ENCODE measurements at regions of chr10 and their contacts with region 1.

Region 1: GRCh38 chr10:58531084-58531695 is 18.5 kb downstream of the BICC1 start:
- DNase-seq: no peak
- H3K4me3 ChIP-seq: no peak overlapping the region; a peak in 1 of 4 replicates
- H3K27ac ChIP-seq: no peak overlapping the region
- H3K4me1 ChIP-seq: peaks cover 0 to 16% of the 10 kb centered on the region in 2 experiments; a peak in 2 of 4 replicates
- H3K27me3 ChIP-seq: no peaks in the 10 kb centered on the region
- CTCF ChIP-seq: peak; percentile 83
- EP300 ChIP-seq: no peak
- RAD21 ChIP-seq: peak; percentile 88

Region 2: DNA sequence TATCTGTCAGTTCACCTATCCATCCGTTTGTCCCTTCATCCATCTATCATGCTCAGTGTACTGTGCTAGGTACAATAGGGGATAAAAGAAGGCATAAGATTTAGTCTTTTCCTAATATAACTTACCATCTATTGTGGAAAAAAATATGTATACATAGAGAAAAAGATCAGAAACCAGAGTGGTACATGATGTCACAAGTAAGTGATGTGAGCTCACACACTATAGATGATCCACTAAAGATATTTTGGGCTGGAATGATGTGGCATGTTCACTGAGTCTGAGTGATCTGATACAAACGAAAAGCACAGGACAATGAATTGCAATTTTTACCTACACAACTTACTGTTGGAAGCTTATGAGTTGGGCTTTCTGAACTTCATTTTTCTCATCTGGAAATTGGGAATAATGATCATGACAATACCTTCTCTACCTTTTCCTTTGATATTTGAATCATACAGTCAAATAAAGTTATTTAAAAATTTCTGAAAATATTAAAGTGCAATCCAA is 148.6 kb before region 1 on chr10:
- CTCF ChIA-PET with region 1: no interaction called
- POLR2A ChIA-PET with region 1: no interaction called
- DNase-seq: no peak
- H3K4me3 ChIP-seq: no peak overlapping the region
- H3K27ac ChIP-seq: no peak overlapping the region
- H3K4me1 ChIP-seq: peaks cover 11 to 18% of the 10 kb centered on the region in 2 experiments; a peak in 3 of 4 replicates
- H3K27me3 ChIP-seq: no peaks in the 10 kb centered on the region
- CTCF ChIP-seq: no peak
- EP300 ChIP-seq: no peak
- RAD21 ChIP-seq: no peak

Region 3: GRCh38 chr10:58641095-58641531 is 109.9 kb after region 1 on chr10:
- CTCF ChIA-PET with region 1: interaction called, 73 read pairs
- POLR2A ChIA-PET with region 1: no interaction called
- DNase-seq: peak; percentile 20
- H3K4me3 ChIP-seq: peak overlapping the region in 1 of 2 experiments; percentile 29; a peak in 1 of 4 replicates
- H3K27ac ChIP-seq: peak overlapping the region; percentile 86 to 88
- H3K4me1 ChIP-seq: peaks cover 17 to 38% of the 10 kb centered on the region in 2 experiments; a peak in 3 of 4 replicates
- H3K27me3 ChIP-seq: no peaks in the 10 kb centered on the region
- CTCF ChIP-seq: peak; percentile 61
- EP300 ChIP-seq: peak; percentile 61 to 87
- RAD21 ChIP-seq: peak; percentile 73

Region 4: GRCh38 chr10:58734116-58734515 is 202.9 kb after region 1 on chr10:
- CTCF ChIA-PET with region 1: interaction called, 20 read pairs
- POLR2A ChIA-PET with region 1: no interaction called
- DNase-seq: peak; percentile 53
- H3K4me3 ChIP-seq: no peak overlapping the region
- H3K27ac ChIP-seq: peak overlapping the region in 1 of 2 experiments; percentile 64; a peak in 2 of 4 replicates
- H3K4me1 ChIP-seq: peaks cover 0 to 6% of the 10 kb centered on the region in 2 experiments; a peak in 2 of 4 replicates
- H3K27me3 ChIP-seq: no peaks in the 10 kb centered on the region
- CTCF ChIP-seq: peak; percentile 42
- EP300 ChIP-seq: no peak
- RAD21 ChIP-seq: peak; percentile 72

Region 5: DNA sequence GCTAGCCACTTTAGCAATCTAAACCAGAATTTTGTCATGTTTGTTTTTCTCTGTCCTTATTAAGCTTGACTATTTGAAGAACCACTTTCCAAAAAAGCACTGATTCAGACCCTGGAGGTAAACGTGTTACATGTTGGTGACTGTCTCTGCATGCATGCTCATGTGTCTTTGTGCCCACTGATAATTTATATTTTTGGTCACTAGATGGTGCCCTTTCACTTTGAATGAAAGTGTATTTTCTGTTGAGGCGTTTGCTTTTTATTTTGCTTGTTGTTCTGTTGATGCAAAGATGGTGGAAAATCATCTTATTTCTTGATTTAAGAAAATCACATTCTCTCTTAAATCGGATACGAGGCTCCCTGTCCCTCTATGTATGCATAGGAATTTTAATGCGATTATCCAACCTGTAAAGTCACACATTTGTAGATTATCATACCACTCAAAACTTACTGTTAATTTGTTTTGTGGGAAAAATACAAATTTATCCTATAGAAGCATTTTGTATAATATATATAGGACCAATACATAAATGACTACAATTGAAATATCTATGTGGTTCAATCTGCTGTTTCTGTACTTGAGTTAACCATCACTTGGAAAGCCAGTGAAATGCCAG is 250.8 kb after region 1 on chr10:
- CTCF ChIA-PET with region 1: interaction called, 21 read pairs
- POLR2A ChIA-PET with region 1: no interaction called
- DNase-seq: peak; percentile 36
- H3K4me3 ChIP-seq: no peak overlapping the region; a peak in 1 of 4 replicates
- H3K27ac ChIP-seq: no peak overlapping the region; a peak in 1 of 4 replicates
- H3K4me1 ChIP-seq: peaks cover 10 to 15% of the 10 kb centered on the region in 2 experiments; a peak in 3 of 4 replicates
- H3K27me3 ChIP-seq: no peaks in the 10 kb centered on the region
- CTCF ChIP-seq: peak; percentile 78
- EP300 ChIP-seq: no peak
- RAD21 ChIP-seq: peak; percentile 92

Measured in SK-N-SH (cell line).